AG04449 (cell line): ENCODE measurements at regions of chr13 and their contacts with region 1.

Region 1: GRCh38 chr13:20924758-20925394 is 22.3 kb upstream of the XPO4 start:
- DNase-seq: peak; percentile 36
- H3K4me3 ChIP-seq: no peak overlapping the region
- CTCF ChIP-seq: peak; percentile 78

Region 2: DNA sequence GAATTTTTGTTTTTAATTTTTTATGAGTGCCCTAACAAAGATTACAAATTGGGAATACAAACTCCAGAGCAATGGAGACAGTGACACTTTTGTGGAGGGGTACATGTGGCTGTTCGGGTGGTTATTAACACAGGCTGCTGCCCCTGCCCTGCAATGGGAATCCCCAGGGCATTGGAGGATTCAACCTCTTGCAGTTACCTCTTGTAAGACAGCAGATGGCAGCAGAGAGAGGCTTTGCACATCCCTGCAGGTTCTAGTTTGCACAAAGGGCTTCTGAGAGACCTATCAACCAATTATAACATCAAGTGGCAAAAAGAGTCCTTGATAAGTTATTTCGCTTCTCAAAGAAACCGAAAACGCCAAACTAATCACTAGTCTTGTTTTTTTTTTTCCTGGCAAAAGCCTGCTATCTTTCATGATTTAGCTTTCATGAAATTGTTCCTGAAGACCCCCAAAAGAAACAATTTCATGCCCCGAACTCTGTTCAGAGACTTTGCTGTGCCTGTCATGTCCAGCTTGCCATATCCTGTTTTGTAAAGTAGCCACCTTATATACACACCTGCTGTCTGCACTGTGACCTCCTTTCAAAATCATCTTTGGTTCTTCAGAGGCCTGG is 742.5 kb before region 1 on chr13:
- CTCF ChIA-PET with region 1: interaction called, 49 read pairs
- POLR2A ChIA-PET with region 1: no interaction called
- DNase-seq: peak; percentile 36
- H3K4me3 ChIP-seq: no peak overlapping the region
- CTCF ChIP-seq: peak; percentile 84

Region 3: DNA sequence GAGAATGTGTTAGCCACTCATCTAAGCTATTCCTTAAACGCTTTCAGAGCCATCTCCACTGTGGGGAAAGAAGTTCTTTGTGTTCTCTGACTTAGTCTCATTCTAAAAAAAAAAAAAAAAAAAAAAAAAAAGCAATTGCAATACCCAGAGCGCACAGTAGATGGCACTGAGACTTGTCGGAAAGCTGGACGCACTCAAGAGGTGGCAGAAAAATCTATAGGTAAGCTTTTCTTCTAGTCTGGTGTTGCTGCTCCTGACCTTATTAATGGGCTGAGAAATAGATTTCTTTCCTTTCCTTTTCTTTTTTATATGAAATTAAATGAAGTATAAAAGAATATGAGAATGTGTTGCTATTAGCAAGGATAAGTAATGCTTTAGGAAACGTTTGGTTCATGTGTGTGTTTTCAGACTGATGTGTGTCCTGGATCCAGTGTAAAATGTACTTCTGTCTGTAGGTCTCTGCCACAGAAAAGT is 727.5 kb before region 1 on chr13:
- CTCF ChIA-PET with region 1: interaction called, 25 read pairs
- POLR2A ChIA-PET with region 1: no interaction called
- DNase-seq: no peak
- H3K4me3 ChIP-seq: no peak overlapping the region
- CTCF ChIP-seq: peak; percentile 58

Region 4: GRCh38 chr13:20495082-20496023 is 429.5 kb before region 1 on chr13:
- CTCF ChIA-PET with region 1: interaction called, 123 read pairs
- POLR2A ChIA-PET with region 1: no interaction called
- DNase-seq: peak; percentile 24
- H3K4me3 ChIP-seq: peak overlapping the region; percentile 4; the same call in 1 of the 2 replicates
- CTCF ChIP-seq: peak; percentile 75

Region 5: DNA sequence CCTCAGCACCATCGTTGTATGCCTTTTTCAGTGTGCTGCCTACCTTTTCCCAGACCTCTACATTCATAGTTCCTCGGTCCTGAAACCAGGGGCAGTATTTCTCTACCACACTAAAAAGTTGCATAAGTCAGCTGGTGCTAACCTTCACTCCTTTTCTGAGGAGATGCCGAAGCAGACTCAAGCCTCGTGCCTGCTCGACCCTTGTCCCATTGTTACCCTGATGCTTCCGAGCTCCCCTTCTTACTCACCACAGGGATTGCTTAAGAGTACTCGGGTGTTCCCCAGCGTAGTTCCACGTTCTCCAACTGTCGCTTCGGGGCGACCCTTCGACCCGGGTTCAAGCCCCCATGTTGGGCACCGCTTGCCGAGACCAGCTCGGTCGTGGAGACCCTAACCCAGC is 240.3 kb before region 1 on chr13:
- CTCF ChIA-PET with region 1: no interaction called
- POLR2A ChIA-PET with region 1: no interaction called
- DNase-seq: no peak
- H3K4me3 ChIP-seq: no peak overlapping the region
- CTCF ChIP-seq: no peak

Region 6: DNA sequence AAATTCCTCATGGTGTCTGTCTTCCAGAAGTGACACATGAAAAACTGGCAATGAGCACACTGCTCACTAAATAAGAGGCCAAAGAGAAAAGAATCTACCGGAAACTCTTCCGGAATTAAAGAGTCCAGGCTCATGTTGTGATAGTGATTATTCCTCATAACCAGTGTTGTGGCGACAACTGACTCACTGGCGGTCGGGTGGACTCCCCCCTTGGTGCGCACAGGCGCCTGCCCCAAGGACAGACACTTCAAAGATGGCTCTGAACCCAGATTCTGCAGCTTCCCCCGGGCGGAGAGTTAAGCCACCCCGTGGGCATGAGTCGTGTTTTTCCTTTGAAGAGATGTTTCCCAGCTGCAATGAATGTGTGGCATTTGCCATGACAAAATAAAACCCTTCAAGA is 211.1 kb before region 1 on chr13:
- CTCF ChIA-PET with region 1: interaction called, 11 read pairs
- POLR2A ChIA-PET with region 1: no interaction called
- DNase-seq: no peak
- H3K4me3 ChIP-seq: no peak overlapping the region
- CTCF ChIP-seq: no peak

Region 7: DNA sequence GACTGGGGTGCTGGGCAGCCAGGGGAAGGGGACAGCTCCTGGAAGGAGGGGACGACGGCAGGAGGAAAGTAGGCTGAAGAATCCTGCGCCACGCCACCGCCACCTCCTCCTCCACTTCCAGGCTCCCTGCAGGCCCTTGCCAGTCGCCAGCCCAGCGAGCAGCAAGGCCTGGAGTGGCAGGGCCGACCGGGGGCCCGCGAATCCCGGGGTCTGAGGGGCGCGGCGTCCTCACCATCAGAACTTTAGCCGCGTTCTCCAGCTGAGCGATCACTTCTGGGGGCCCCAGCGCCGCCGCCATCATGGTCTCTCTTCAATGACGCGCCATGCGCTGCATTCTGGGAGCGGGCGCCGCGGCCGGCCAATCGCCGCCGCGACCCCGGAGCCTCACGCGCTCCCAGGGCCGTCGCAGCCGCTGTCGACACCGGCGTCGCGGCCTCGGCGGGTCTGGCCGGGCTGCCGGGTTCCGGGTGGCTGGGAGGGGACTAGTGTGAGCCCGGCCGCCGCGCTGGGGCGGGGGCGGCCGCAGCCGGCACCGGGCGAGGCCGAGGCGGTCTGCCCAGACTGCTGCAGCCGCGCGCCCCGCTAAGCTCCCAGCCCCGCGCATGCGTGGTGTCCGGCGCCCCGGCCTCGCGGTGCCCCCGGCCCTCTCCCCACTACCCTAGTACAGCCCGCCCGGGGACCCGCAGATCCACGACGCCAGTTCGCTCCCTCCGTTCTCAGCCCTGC is 22.3 kb before region 1 on chr13 and contains the start of gene XPO4:
- CTCF ChIA-PET with region 1: interaction called, 12 read pairs
- POLR2A ChIA-PET with region 1: no interaction called
- DNase-seq: no peak
- H3K4me3 ChIP-seq: peak within 1 kb of the TSS; percentile 95
- CTCF ChIP-seq: no peak

Region 8: DNA sequence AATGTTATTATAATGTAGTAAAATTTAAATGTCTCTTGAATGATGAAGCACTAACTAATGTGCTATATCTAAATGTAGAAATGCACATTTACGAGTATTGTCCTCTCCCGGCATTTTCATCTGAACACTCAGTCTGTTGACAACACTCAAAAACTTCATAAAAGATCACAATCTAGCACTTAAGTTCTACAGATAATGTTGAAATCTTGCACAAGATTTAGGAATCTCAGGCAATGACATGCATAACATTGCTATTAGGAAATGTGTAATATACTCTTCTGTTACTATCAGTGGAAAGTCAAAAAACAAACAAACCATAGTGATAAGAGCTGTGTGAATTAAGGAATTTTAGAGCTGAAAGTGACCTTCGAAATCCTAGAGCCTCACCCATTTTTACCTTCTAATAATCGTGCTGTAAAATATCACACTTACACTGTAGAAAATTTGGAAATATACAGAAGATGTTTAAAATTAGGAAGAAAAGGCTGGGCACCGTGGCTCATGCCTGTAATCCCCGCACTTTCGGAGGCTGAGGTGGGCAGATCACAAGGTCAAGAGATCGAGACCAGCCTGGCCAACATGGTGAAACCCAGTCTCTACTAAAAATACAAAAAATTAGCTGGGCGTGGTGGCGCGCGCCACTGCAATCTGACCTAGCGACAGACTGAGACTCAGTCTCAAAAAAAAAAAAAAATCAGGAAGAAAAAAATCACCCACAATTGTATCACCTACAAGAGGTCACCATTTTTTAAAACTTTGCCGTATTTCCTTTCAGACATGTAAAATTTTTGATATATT is 15.4 kb after region 1 on chr13:
- CTCF ChIA-PET with region 1: interaction called, 38 read pairs
- POLR2A ChIA-PET with region 1: no interaction called
- DNase-seq: peak; percentile 21
- H3K4me3 ChIP-seq: no peak overlapping the region
- CTCF ChIP-seq: no peak

Region 9: GRCh38 chr13:21297914-21298831 is 373.3 kb after region 1 on chr13:
- CTCF ChIA-PET with region 1: no interaction called
- POLR2A ChIA-PET with region 1: no interaction called
- DNase-seq: peak; percentile 10
- H3K4me3 ChIP-seq: peak overlapping the region; percentile 94
- CTCF ChIP-seq: peak; percentile 97